HAP-1 (cell line): ENCODE measurements at regions of chr6 and their contacts with region 1.

Region 1: DNA sequence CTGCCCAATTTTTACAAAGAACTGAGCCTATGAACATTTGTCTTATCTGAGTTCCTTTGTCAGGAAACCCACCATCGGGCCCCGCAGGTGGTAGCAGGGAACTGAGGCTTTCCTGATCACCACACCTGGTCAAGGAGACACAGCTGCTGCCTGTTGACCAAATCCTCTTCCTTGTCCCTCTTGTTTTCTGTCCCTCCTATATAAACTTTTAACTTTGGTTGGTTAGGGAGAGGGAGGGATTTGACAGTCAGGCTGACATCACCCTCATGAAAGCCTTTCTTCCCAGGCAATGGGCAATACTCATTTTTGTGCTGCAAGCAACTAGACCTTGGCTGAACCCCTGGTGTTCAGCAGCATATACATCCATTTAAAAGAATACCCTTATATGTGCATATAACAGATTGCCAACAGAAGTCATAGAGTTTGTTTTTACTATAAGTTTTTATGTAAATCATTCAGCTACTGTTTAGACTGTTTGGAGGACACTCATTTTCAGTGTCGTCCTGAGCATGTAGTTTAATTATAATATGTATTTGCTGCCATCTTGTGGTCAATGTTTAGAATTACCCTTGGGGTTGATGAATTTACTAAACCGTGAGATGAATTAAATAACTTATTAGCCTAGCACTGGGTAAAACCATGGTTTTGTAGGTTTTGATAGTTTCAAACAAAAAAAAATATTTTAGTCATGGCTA is 17.0 kb downstream of the CRISP1 start:
- DNase-seq: peak in 1 of 2 experiments; percentile 40
- H3K4me3 ChIP-seq: no peak overlapping the region
- H3K4me1 ChIP-seq: no peaks in the 10 kb centered on the region
- H3K27me3 ChIP-seq: 0 out of 2 replicates have a peak, but pooled peaks cover 4% of the 10 kb centered on the region

Region 2: GRCh38 chr6:49430187-49430586 is 419.2 kb before region 1 on chr6:
- in situ Hi-C with region 1: no loop called
- DNase-seq: no peak
- H3K4me3 ChIP-seq: no peak overlapping the region
- H3K4me1 ChIP-seq: no peaks in the 10 kb centered on the region
- H3K27me3 ChIP-seq: no peaks in the 10 kb centered on the region

Region 3: GRCh38 chr6:49625140-49625539 is 224.2 kb before region 1 on chr6:
- in situ Hi-C with region 1: loop called (anchors 10 kb)
- DNase-seq: no peak
- H3K4me3 ChIP-seq: no peak overlapping the region
- H3K4me1 ChIP-seq: no peaks in the 10 kb centered on the region
- H3K27me3 ChIP-seq: no peaks in the 10 kb centered on the region

Region 4: GRCh38 chr6:49923826-49924225 is 74.5 kb after region 1 on chr6:
- in situ Hi-C with region 1: no loop called
- DNase-seq: no peak
- H3K4me3 ChIP-seq: no peak overlapping the region
- H3K4me1 ChIP-seq: no peaks in the 10 kb centered on the region
- H3K27me3 ChIP-seq: peaks cover 5% of the 10 kb centered on the region; the same call in 1 of the 2 replicates